Pancreas (tissue), 10 donors: ENCODE measurements at regions of chr1 and their contacts with region 1.

Region 1: DNA sequence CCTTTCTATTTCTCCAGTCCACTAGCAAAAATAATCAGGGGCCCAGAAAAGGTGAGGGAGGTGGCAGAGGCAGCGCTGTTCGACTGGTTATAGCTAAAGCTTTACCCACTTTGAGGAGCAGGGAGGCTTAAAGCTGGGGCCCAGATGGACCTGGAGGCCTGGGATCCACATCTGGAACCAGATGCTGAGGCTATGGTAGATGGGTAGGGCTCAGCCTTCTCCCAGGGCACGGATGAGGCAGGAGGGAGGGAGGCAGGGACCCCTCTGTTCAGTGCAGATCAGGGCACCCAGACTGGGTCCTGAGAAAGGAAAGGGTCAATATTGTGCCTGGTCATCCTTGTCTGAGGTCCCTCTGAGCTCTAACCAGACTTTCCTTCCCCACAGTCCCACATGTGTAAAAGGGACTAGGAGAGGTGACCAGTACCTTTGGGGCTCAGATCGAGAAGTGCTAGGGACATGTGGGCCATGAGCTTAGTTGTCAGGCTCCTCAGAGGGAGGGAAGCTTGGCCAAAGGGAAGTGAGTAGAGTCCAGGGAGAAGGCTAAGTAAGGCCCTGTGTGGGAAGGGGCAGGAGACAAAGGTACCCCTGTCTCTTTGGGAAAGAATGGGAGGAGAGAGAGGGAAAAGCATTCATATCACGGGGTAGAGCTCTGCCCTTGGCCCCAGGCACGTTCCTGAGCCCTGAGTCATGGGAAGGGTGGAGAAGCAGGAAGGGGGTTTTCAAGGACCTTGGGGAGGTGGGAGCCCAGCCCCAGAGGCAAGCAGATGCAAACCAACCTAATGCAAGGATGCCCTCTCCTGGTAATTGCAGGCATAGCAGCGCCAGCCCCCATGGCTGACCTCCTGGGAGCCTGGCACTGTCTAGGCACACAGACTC is 15.4 kb downstream of the LMNA start:
- DNase-seq: peak; percentile 88 to 92 (median 90)
- ATAC-seq: peak; percentile 80 to 88 (median 86)
- H3K4me3 ChIP-seq: no peak overlapping the region
- H3K27ac ChIP-seq: peak overlapping the region; percentile 64 to 92 (median 78)
- H3K4me1 ChIP-seq: peaks cover 30 to 52% (median 32%) of the 10 kb centered on the region in 3 donors
- H3K27me3 ChIP-seq: no peaks in the 10 kb centered on the region
- CTCF ChIP-seq: peak; percentile 91 to 98 (median 96)

Region 2: DNA sequence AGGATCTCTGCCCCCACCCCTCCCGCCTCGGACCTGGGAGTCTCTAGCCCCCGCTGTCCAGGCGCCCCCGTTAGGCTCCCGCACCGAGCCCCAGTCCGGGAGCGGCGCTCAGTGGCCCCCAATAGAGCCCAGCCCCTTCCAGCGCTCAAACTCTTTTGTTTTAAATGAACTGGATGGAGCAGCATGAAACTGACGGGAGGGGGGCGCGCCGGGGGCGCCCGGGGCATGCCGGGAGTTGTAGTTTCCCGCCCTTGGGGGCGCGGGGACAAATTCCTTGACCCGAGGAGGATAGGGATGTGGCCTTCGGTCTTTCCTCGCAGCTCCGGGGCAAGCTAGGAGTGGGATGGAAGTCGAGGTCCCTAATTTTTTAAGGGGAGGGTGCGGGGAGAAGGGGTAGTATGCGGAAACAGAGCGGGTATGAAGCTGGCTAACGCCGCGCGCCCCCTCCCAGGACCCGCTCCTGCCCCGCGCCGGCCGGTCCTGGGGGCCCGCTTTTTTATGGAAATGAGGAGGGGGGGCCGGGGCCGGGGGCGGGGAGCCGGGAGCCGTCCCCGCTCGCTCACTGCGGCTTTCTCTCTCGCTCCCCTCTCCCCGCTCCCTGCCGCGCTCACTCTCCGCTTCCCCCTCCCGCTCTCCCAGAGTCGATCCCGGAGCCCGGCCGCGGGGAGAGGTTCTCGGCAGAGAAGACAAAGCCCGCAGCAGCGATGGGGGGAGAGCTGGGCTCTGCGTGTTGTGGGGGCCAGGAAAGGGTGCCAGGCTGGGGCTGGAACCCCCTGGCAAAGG is 47.4 kb before region 1 on chr1 and contains the start of gene MEX3A:
- intact Hi-C with region 1: loop called in 1 of 3 experiments (anchors 10 kb)
- DNase-seq: peak; percentile 65 to 88 (median 70)
- ATAC-seq: peak; percentile 86 to 90 (median 87)
- H3K4me3 ChIP-seq: peak within 1 kb of the TSS; percentile 63 to 89 (median 80)
- H3K27ac ChIP-seq: peak within 1 kb of the TSS in 1 of 4 donors; percentile 27
- H3K4me1 ChIP-seq: peaks cover 0 to 3% (median 0%) of the 10 kb centered on the region in 3 donors
- H3K27me3 ChIP-seq: no peaks in the 10 kb centered on the region
- CTCF ChIP-seq: no peak
- total RNA-seq, gene MEX3A: 0.12 to 3.1 (median 0.65) TPM

Region 3: DNA sequence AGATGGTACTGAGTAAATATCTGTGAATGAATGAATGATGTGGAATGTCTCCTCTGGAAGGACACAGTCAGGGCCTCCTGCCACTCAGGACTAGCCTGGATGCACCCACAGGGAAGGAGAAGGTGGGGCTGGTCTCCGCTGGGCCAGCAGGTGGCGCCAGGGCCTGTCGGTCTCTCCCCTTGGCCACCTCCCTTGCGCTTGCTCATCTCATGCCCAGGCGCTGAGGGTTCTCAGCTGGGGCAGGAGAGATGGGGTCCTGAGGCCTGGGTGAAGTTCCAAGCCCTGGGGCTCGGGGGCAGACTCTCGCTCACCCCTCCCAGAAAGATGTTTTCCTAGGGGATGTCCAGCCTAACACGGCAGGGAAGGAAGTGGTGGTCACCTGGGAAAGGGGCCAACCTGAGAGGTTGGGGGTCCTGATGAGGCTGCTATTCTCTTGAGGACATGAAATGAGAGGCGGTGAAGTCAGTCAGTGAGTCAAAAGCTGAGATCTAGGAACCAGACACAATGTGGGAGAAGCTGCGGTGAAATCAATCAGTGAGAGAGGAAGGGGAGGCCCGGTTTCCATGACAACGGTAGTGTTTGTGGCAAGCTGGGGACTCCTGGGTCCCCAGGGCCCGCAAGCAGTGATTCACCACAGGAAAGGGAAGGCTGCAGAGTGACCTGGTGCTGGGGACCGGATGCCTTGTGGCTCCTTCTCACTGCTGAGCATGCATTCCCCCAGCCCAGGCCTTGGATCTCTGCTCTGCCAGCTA is 33.1 kb before region 1 on chr1:
- intact Hi-C with region 1: loop called in 2 of 3 experiments (anchors 2 to 5 kb)
- DNase-seq: peak; percentile 82 to 95 (median 91)
- ATAC-seq: peak; percentile 98 to 99 (median 98)
- H3K4me3 ChIP-seq: no peak overlapping the region
- H3K27ac ChIP-seq: peak overlapping the region in 2 of 4 donors; percentile 57 to 65
- H3K4me1 ChIP-seq: peaks cover 0 to 3% (median 0%) of the 10 kb centered on the region in 3 donors
- H3K27me3 ChIP-seq: no peaks in the 10 kb centered on the region
- CTCF ChIP-seq: peak; percentile 90 to 95 (median 93)

Region 4: DNA sequence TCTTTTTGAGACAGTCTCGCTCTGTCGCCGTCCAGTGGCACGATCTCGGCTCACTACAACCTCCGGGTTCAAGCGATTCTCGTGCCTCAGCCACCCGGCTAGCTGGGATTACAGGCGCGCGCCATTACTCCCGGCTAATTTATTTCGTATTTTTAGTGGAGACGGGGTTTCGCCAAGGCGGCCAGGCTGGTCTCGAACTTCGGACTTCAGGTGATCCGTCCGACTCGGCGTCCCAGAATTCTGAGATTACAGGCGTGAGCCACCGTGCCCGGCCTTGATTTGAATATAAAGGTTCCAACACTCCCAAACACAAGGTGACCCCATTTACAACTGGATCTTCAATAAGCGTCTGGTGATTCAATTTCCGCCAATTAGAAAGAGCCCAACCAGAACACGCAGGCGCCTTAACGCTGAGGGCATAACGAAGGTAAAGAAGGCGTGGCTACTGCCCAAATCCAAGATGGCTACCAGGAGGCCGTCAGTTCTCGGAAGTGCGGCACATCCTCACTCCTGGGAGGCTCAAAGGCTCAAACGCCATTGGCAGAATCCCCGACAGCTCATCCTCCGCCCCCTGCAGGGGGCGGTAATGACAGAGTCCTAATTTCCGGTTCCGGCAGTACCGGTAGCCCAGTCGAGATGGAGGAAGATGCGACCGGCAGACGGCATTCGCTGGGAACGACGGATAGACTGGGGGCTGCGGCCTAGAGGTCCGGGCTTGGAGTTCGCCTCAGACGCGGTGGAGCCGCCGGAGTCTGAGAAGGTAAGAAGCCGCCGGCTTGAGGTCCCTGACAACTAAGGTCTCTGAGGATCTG is 63.8 kb after region 1 on chr1 and contains the start of gene SLC25A44:
- intact Hi-C with region 1: no loop called
- DNase-seq: peak; percentile 89 to 99 (median 94)
- ATAC-seq: peak; percentile 98 to 100 (median 99)
- H3K4me3 ChIP-seq: peak within 1 kb of the TSS; percentile 72 to 90 (median 81)
- H3K27ac ChIP-seq: peak within 1 kb of the TSS; percentile 35 to 76 (median 66)
- H3K4me1 ChIP-seq: peaks cover 5 to 11% (median 7%) of the 10 kb centered on the region in 3 donors
- H3K27me3 ChIP-seq: no peaks in the 10 kb centered on the region
- CTCF ChIP-seq: peak; percentile 19 to 81 (median 56)
- total RNA-seq, gene SLC25A44: 4.0 to 9.9 (median 6.7) TPM